AG04449 (cell line): ENCODE measurements at regions of chr17 and their contacts with region 1.

Region 1: DNA sequence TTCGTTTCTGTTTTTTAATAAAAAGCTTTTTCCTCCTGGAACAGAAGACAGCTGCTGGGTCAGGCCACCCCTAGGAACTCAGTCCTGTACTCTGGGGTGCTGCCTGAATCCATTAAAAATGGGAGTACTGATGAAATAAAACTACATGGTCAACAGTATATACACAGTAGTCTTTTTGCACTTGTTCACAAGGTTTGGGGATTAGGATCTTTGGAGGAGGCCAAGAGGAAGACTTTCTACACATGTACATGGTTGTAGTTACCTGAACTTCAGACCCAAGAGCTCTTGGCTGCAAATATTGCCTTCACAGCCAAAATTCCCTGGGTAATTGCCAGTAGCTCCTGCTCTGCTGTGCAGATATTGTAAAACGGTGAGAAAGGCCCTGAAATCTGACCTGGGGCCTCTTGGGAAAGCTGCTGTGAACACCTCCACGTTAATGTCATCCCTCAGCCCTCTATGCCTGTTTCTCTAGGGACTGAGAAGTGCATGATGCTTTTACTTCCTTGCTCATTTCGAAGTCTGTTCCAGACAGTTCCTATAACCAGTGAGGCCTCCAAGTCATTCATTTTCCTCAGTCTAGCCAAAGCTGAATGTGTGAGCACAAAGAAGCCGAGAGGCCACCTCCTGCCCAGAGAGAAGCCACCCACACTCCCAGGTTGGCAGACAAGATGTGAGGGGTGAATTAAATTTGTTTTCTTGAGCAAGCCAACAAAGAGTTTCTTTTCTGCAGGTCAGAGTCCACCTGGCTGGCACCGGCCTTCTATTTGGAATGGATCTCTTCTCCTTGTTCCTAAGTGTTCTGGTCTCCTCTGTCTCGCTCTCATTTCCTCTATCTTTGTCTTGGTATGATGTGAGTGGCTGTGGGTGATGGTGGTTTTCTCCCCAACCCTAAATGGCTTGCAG is 15.9 kb downstream of the ANKRD40 start:
- DNase-seq: no peak
- H3K4me3 ChIP-seq: no peak overlapping the region
- CTCF ChIP-seq: no peak

Region 2: GRCh38 chr17:50541716-50542688 is 149.8 kb before region 1 on chr17:
- CTCF ChIA-PET with region 1: interaction called, 265 read pairs
- POLR2A ChIA-PET with region 1: no interaction called
- DNase-seq: no peak
- H3K4me3 ChIP-seq: peak overlapping the region; percentile 67
- CTCF ChIP-seq: peak; percentile 53

Region 3: DNA sequence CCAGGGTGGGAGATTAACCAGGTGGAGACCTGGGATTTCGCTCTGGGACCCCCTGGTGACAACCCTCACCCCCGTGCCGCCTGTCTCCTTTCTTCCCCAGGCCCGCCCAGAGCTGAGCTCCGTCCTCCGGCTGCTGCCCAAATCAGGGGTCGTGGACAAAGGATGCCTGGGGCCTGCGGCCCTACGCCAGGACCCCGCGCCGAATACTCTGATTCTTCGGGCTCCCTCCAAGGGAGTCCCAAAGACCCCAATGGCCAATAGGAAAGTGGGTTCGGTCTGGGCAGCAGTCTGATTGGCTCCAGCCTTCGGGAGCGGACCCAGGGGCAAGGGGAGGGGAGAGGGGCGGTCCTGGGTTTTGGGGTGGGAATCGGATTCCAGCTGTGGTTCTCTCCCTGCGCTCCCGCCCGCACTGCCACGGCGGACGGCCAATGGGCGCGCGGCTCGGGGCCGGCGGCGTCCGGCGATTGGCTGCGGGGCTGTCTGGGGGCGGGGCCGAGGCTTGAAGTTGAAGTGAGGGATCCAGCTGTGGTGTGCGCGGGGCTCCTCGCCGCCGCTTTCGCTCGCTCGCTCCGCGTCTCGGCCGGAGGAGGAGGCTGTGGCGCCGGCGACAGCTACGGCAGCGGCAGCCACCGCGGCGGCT is 131.5 kb before region 1 on chr17 and contains the start of gene CACNA1G:
- CTCF ChIA-PET with region 1: interaction called, 20 read pairs
- POLR2A ChIA-PET with region 1: no interaction called
- DNase-seq: no peak
- H3K4me3 ChIP-seq: peak within 1 kb of the TSS; percentile 49
- CTCF ChIP-seq: no peak

Region 4: GRCh38 chr17:50638851-50639767 is 52.7 kb before region 1 on chr17:
- CTCF ChIA-PET with region 1: interaction called, 22 read pairs
- POLR2A ChIA-PET with region 1: interaction called, 3 read pairs
- DNase-seq: peak; percentile 87
- H3K4me3 ChIP-seq: no peak overlapping the region
- CTCF ChIP-seq: no peak

Region 5: DNA sequence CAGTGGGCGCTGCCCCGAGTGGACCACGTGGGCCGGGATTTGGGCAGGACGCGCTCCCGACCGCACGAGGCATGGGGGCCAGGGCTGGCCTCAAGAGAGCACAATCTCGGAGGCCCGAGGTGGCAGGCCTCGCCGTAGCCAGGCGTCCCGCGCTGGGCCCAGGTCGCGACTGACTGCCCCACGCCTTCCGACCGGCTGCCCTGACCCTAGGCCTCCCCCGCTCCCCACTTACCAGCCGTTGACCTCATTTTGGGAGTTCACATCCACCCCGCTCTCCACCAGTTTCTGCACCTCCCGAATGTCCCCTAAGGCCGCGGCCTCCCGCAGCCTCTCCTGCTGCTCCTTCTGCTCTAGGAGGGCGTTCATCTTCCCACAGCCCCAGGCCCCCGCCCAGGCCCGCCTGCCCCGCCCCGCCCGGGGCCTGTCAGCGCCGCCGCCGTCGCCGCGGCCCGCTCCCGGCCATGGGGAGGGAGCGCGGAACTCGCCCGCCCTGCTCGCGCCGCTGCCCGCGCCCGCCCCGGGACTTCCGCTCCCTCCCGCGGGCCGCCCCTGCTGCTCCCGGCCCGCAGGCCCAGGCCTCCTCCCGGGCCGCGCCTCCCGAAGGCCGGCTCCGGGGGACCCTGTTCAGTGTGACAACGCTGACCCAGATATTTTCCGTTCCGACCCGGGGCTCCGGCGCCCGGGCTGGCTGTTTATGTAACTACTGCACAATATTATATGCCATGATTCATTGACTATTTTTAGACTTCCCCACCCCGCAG is 15.7 kb after region 1 on chr17 and contains the start of gene ANKRD40:
- CTCF ChIA-PET with region 1: interaction called, 82 read pairs
- POLR2A ChIA-PET with region 1: interaction called, 3 read pairs
- DNase-seq: peak; percentile 70
- H3K4me3 ChIP-seq: peak within 1 kb of the TSS; percentile 88
- CTCF ChIP-seq: no peak